IMR-90 (cell line): ENCODE measurements at regions of chr2 and their contacts with region 1.

Region 1: GRCh38 chr2:233854241-233854981 is at the start of gene HJURP:
- DNase-seq: peak; percentile 96
- ATAC-seq: peak; percentile 97
- H3K4me3 ChIP-seq: peak within 1 kb of the TSS; percentile 98
- H3K27ac ChIP-seq: peak within 1 kb of the TSS; percentile 90
- H3K4me1 ChIP-seq: peaks cover 13% of the 10 kb centered on the region
- H3K27me3 ChIP-seq: no peaks in the 10 kb centered on the region
- CTCF ChIP-seq: no peak
- POLR2A ChIP-seq: peak; percentile 87
- RAD21 ChIP-seq: no peak
- total RNA-seq, gene HJURP: 22.6 and 24.2 TPM in 2 replicates

Region 2: DNA sequence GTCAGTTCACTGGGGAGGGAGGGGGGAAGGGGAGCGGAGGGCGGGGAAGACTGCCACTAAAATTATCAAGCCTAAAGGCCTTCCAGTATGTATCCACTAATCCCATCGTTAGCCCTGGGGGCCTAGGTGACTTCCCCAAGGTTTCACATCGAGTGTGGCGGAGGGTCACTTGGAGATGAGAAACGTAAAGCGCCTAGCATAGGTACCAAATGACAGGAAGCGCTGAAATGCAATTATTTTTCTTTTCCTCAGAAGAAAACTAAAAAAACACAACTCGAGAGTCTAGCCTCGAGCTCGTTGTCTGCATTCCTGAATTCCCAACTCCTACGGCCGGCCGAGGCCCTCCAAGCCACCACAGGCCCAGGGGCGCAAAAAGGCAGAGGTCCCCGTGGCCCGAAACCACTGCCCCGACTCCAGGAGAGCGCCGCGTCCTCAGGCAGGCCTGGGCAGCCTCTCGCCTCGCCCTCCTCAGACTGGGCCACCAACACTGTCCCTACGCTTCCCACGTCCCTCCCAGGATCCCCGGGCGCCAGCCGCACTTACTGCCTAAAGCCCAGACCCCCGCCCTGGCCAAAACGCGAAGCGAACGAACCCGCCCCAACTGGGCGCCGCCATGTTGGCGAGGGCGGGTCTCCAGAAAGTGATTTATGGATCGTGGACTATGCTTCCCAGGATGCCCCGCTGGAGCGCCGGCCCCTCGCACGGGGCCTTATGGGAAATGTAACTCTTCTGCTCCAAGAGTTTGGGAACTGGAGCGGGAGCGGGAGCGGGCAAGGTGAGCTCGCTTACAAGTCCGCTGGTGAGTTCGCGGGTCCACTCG is 288.1 kb before region 1 on chr2 and contains the start of gene USP40:
- CTCF ChIA-PET with region 1: no interaction called
- POLR2A ChIA-PET with region 1: no interaction called
- dilution Hi-C with region 1: no loop called
- in situ Hi-C with region 1: no loop called
- intact Hi-C with region 1: loop called (anchors 10 kb)
- DNase-seq: peak; percentile 90
- ATAC-seq: peak; percentile 97
- H3K4me3 ChIP-seq: peak within 1 kb of the TSS; percentile 94
- H3K27ac ChIP-seq: peak within 1 kb of the TSS; percentile 99
- H3K4me1 ChIP-seq: peaks cover 7% of the 10 kb centered on the region; the same call in 1 of the 2 replicates
- H3K27me3 ChIP-seq: no peaks in the 10 kb centered on the region
- CTCF ChIP-seq: no peak
- POLR2A ChIP-seq: peak; percentile 94
- RAD21 ChIP-seq: no peak
- total RNA-seq, gene USP40: 27.8 and 30.8 TPM in 2 replicates

Region 3: GRCh38 chr2:233584210-233584729 is 270.1 kb before region 1 on chr2:
- CTCF ChIA-PET with region 1: no interaction called
- POLR2A ChIA-PET with region 1: no interaction called
- dilution Hi-C with region 1: no loop called
- in situ Hi-C with region 1: no loop called
- intact Hi-C with region 1: no loop called
- DNase-seq: no peak
- ATAC-seq: no peak
- H3K4me3 ChIP-seq: no peak overlapping the region
- H3K27ac ChIP-seq: no peak overlapping the region
- H3K4me1 ChIP-seq: no peaks in the 10 kb centered on the region
- H3K27me3 ChIP-seq: peaks cover 2% of the 10 kb centered on the region; the same call in 1 of the 2 replicates
- CTCF ChIP-seq: no peak
- POLR2A ChIP-seq: no peak
- RAD21 ChIP-seq: no peak

Region 4: DNA sequence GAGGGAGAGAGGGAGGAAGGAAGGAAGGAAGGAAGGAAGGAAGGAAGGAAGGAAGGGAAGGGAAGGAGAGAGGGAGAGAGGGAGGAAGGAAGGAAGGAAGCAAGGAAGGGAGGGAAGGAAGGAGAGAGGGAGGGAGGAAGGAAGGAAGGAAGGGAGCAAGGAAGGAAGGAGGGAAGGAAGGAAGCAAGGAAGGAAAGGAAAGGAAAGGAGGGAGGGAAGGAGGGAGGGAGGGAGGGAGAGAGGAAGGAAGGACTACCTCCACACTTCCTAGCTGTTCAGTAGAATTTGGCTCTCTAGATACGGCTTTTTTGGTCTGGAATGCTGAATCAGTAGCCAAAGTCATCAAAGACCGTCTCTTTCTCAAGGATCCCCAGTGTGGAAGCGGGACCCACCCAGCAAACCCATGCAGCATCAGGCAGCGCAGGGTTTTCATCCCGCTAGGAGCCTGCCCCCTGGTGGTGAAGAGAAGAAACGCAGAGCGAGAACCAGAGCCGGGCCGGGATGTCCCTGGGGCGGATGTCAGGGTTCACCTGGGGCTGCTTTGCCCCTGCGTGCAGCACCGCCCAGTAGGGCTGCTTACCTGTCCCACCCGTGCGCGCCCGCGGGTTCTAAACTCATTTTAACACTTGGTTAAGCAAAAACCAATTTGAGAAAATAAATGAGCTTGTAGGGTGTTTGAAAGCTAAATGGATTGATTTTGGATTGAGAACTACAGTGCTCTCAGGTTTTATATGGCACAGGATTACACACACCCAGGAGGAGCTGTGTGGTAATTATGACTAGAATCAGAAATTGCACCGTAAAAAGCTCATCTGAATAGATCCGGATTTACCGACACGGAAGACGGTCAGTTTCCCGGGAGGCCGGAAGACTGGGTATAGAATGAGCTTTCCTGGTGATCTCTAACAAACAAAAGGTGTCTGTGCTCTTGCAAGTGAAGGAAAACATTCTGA is 690.5 kb after region 1 on chr2:
- CTCF ChIA-PET with region 1: no interaction called
- POLR2A ChIA-PET with region 1: no interaction called
- dilution Hi-C with region 1: no loop called
- in situ Hi-C with region 1: no loop called
- intact Hi-C with region 1: loop called (anchors 10 kb)
- DNase-seq: peak; percentile 59
- ATAC-seq: peak; percentile 95
- H3K4me3 ChIP-seq: no peak overlapping the region
- H3K27ac ChIP-seq: no peak overlapping the region
- H3K4me1 ChIP-seq: no peaks in the 10 kb centered on the region
- H3K27me3 ChIP-seq: no peaks in the 10 kb centered on the region; the same call in 1 of the 2 replicates
- CTCF ChIP-seq: peak; percentile 77
- POLR2A ChIP-seq: no peak
- RAD21 ChIP-seq: peak; percentile 88